Activated CD8-positive, alpha-beta T cell treated with anti-CD3 and anti-CD28 coated beads, Interleukin-2, amount 10 ng/mL, durations not matched to agents 7 days and 5 days (primary cell): ENCODE measurements at regions of chr3 and their contacts with region 1.

Region 1: DNA sequence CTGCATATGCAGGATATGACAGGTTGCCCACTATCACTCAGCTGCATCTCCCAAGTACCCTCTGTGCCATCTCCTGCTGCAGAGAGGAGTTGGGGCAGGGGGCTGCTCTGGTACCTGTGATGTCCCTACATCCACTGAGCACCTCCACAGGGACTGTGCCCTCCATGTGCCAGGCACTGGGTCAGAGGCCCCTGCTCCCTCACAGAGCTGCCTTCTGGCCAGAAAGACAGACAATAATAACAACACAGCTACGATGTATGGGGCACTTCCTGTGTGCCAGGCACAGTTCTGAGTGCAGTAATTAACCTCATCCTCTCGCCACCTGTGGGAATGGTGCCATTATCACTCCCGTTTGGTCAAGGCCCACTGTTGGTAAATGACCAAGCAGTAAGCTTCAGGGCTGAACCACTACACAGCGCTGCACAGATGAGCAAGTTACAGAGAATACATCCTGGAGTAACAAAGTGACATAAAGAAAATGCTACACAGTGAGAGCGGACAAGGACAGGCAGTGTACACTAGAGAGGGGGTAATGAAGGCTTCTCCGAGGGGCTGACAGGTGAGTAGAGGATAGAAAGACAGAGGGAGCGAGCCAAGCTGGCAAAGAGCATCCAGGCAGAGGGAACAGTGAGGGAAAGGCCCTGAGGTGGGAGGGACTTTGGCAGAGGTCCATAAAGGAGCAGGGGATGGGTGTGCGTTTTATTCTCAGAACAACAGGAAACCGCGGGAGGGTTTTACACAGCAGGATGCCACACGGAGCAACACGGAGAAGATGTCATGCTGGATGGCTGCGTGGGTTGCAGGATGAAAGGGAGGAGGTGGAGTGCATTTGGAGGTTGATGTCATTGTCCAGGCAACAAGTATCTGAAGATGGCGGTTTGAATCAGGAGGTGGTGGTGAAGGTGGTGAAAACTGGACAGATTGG is 13.6 kb downstream of the WNT7A start:
- DNase-seq: peak; percentile 65
- ATAC-seq: peak; percentile 79
- H3K4me3 Mint-ChIP-seq: peak overlapping the region; percentile 36
- H3K27ac Mint-ChIP-seq: peak overlapping the region; percentile 92
- H3K4me1 Mint-ChIP-seq: peaks cover 34% of the 10 kb centered on the region
- H3K27me3 Mint-ChIP-seq: peaks cover 12% of the 10 kb centered on the region

Region 2: GRCh38 chr3:13884851-13885703 is 18.8 kb after region 1 on chr3:
- CTCF ChIA-PET with region 1: interaction called, 15 read pairs
- POLR2A ChIA-PET with region 1: no interaction called
- DNase-seq: peak; percentile 81
- ATAC-seq: peak; percentile 73
- H3K4me3 Mint-ChIP-seq: no peak overlapping the region
- H3K27ac Mint-ChIP-seq: no peak overlapping the region
- H3K4me1 Mint-ChIP-seq: peaks cover 6% of the 10 kb centered on the region
- H3K27me3 Mint-ChIP-seq: peaks cover 44% of the 10 kb centered on the region